Lower leg skin (tissue), 4 donors: ENCODE measurements at regions of chr14 and their contacts with region 1.

Region 1: GRCh38 chr14:32576088-32576795 is 247.1 kb downstream of the AKAP6 start:
- DNase-seq: peak in 1 of 2 donors; percentile 53
- H3K4me3 ChIP-seq: no peak overlapping the region
- CTCF ChIP-seq: peak in 1 of 3 donors; percentile 83
- POLR2A ChIP-seq: no peak

Region 2: GRCh38 chr14:32509632-32510187 is 66.5 kb before region 1 on chr14:
- intact Hi-C with region 1: no loop called
- DNase-seq: peak; percentile 56 to 90
- H3K4me3 ChIP-seq: no peak overlapping the region
- CTCF ChIP-seq: no peak
- POLR2A ChIP-seq: no peak

Region 3: GRCh38 chr14:34322940-34323418 is 1746.7 kb after region 1 on chr14:
- intact Hi-C with region 1: loop called (anchors 10 kb)
- DNase-seq: no peak
- H3K4me3 ChIP-seq: no peak overlapping the region
- CTCF ChIP-seq: no peak
- POLR2A ChIP-seq: no peak